Heart left ventricle (tissue), 16 donors: ENCODE measurements at regions of chr6 and their contacts with region 1.

Region 1: DNA sequence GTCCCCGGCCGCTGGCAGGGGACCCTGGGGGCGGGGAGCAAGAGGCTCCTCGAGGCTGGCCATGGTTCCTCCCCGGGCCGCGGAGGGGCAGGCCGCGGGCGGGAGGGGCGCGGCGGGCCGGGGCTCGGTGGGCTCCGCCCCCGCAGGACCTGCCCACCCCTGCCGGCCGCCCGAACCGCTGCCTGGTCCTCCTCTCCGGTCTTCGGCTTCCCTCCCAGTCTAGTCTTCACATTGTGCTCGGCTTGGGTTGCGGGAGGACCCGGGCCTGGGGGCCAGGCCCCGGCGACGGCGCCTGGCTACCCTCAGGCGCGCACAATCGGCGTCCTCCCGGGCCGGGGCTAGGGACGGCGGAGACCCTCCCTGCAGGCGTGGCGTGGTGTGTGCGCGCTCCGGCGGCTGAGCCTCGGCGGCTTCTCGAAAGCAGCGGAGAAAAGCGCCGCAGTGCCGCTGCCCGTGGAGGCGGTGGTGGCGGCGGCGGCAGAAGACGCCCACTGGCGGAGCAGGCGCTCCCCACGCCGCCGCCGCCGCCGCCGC is at the start of gene PDE10A:
- DNase-seq: peak; percentile 81 to 88 (median 84)
- ATAC-seq: peak; percentile 52 to 83 (median 73)
- H3K4me3 ChIP-seq: peak within 1 kb of the TSS; percentile 66 to 93 (median 80)
- H3K27ac ChIP-seq: peak within 1 kb of the TSS; percentile 57 to 98 (median 94)
- H3K4me1 ChIP-seq: peaks cover 0 to 48% (median 20%) of the 10 kb centered on the region in 12 donors
- H3K27me3 ChIP-seq: peaks cover 0 to 51% (median 19%) of the 10 kb centered on the region in 9 donors
- CTCF ChIP-seq: peak in 4 of 12 donors; percentile 14 to 26 (median 18)
- POLR2A ChIP-seq: peak in 1 of 2 donors; percentile 24
- total RNA-seq, gene PDE10A: 8.6 to 22.4 (median 12.8) TPM

Region 2: DNA sequence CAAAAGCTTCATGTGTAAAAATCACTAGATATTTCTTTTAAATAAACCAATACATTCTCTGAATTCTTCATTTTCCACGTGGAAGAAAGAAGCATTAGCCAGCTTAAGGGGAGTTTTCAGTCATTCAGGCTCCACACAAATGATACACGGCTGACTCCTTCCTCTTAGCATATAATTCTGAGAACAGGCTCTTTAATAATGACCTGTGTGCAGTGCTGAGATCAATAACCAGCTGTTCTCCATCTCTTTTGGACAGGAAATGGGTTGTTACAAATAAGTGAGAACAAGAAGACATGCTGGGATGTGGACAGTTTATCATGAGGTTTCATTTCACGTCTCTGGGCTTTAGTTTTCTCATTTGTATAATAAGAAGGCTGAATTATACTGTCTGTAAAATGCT is 206.5 kb before region 1 on chr6:
- intact Hi-C with region 1: loop called in 1 of 10 experiments (anchors 10 kb)
- DNase-seq: no peak
- ATAC-seq: peak in 1 of 4 donors; percentile 28
- H3K4me3 ChIP-seq: no peak overlapping the region
- H3K27ac ChIP-seq: no peak overlapping the region
- H3K4me1 ChIP-seq: peaks cover 0 to 25% (median 11%) of the 10 kb centered on the region in 12 donors
- H3K27me3 ChIP-seq: no peaks in the 10 kb centered on the region
- CTCF ChIP-seq: no peak
- POLR2A ChIP-seq: no peak

Region 3: DNA sequence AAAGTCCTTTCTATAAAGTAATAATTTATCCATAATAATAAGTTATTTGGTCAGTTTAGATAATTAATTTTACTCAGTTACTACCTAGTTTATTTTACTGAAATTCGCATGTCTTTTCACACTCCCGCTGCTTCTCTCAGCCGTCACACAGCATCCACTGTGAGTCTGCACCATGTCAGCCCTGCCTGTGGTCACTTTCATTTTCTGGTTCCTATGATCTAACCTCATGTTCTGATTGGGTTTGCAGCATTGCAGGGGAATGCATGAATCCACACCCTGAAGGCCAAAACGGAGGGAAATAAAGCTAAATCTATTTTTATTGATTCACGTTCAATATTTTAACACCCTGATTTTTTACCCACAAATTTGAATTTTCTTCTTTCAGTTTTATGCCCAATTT is 47.2 kb before region 1 on chr6:
- intact Hi-C with region 1: loop called in 2 of 10 experiments (anchors 2 to 5 kb)
- DNase-seq: peak in 3 of 5 donors; percentile 28 to 32 (median 31)
- ATAC-seq: peak in 3 of 4 donors; percentile 69 to 91 (median 88)
- H3K4me3 ChIP-seq: peak overlapping the region in 10 of 12 donors; percentile 1 to 54 (median 42)
- H3K27ac ChIP-seq: peak overlapping the region; percentile 19 to 82 (median 73)
- H3K4me1 ChIP-seq: peaks cover 0 to 20% (median 3%) of the 10 kb centered on the region in 12 donors
- H3K27me3 ChIP-seq: no peaks in the 10 kb centered on the region
- CTCF ChIP-seq: no peak
- POLR2A ChIP-seq: no peak

Region 4: DNA sequence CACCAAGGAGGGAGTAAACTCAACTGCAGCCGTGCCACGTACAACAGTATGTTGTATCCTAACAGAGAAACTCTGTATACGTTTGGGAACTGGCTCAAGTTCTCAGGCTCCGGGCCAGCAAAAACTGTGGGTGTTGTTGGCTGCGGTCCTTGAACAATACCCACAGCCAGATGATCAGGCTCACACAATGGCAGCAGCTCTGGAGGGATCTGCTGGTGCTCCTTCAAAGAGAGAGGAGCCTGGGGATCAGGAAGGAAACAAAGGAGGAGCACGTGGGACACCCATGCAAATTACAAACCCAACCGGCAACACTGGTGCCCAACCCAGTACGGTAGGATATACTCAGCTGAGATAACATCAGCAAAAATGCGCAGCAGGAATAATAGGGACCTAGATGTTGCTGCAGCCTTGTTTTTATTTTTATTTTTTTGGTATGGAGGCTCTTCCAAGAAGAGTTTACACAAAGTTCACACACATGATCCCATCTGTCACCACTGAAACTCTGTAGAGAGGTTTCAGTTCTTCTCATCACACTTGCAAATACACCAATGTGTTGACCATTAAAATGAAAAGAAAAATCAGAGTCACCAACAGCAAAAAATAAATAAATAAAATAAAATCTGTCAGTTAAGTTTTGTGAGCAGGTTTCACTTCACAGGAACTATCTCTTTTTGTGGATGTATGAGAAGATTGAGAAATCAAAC is 41.4 kb after region 1 on chr6:
- intact Hi-C with region 1: loop called in 2 of 10 experiments (anchors 2 to 5 kb)
- DNase-seq: no peak
- ATAC-seq: peak in 2 of 4 donors; percentile 11 to 23
- H3K4me3 ChIP-seq: no peak overlapping the region
- H3K27ac ChIP-seq: no peak overlapping the region
- H3K4me1 ChIP-seq: peaks cover 0 to 28% (median 12%) of the 10 kb centered on the region in 12 donors
- H3K27me3 ChIP-seq: no peaks in the 10 kb centered on the region
- CTCF ChIP-seq: no peak
- POLR2A ChIP-seq: no peak

Region 5: GRCh38 chr6:165766457-165766856 is 103.6 kb after region 1 on chr6:
- intact Hi-C with region 1: loop called in 3 of 10 experiments (anchors 2 to 5 kb)
- DNase-seq: peak in 1 of 5 donors; percentile 23
- ATAC-seq: peak in 1 of 4 donors; percentile 81
- H3K4me3 ChIP-seq: no peak overlapping the region
- H3K27ac ChIP-seq: peak overlapping the region in 9 of 12 donors; percentile 12 to 77 (median 67)
- H3K4me1 ChIP-seq: peaks cover 0 to 25% (median 13%) of the 10 kb centered on the region in 12 donors
- H3K27me3 ChIP-seq: no peaks in the 10 kb centered on the region
- CTCF ChIP-seq: no peak
- POLR2A ChIP-seq: no peak

Region 6: DNA sequence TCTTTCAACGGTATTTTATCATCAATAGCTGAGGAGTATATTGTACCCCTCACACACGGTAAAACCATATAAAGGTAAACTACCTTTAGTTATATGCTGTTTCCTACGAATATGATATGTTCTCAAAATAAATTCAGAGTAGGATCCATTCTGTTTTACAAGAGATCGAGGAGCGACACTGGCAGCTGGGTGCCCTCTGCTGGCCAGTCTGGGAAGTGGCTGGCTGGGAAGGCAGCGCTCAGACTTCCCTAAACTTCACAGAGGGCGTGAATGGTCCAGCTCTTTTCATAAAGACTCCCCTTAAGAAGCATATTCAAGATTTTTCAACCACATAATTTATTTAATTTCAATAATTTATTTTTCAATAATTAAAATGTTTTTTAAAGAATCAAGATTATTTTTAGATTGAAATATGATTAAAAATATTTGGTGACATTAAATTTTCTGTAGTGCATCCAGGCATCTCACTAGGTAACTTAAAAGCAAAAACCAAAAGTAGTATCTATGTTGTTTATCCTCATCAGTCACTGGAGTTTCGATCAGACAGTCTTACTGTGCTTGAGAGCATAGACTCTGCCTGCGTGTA is 187.7 kb after region 1 on chr6:
- intact Hi-C with region 1: loop called in 4 of 10 experiments (anchors 2 to 10 kb)
- DNase-seq: peak; percentile 64 to 84 (median 78)
- ATAC-seq: peak; percentile 62 to 82 (median 69)
- H3K4me3 ChIP-seq: peak overlapping the region in 8 of 12 donors; percentile 3 to 42 (median 32)
- H3K27ac ChIP-seq: no peak overlapping the region
- H3K4me1 ChIP-seq: peaks cover 0 to 26% (median 6%) of the 10 kb centered on the region in 12 donors
- H3K27me3 ChIP-seq: peaks cover 12 to 42% (median 24%) of the 10 kb centered on the region in 9 donors
- CTCF ChIP-seq: peak; percentile 96 to 100 (median 98)
- POLR2A ChIP-seq: no peak